GM12878 (cell line): ENCODE measurements at regions of chr9 and their contacts with region 1.

Region 1: DNA sequence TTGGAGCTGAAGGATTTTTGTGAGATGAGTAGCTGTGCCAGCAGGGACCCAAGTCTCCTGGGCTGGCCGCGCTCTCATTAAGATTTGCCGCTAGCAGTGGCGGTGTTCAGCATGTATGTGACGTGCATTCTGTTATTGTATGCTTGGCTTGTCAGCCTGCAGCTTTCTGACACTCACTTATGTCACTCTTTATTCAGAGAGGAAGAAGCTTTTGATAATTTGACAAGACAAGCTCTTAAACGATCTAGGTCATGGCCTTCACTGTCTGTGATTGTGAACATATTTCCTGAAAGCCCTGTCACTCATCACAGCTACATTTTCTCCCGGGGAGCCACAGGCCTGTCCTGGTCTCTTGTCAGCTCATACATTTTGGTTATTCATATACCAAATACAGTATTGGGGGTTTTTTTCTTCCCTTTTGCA is 98.2 kb upstream of the GRHPR start:
- DNase-seq: peak; percentile 43
- ATAC-seq: peak; percentile 76
- H3K4me3 ChIP-seq: peak overlapping the region; percentile 18
- H3K27ac ChIP-seq: peak overlapping the region; percentile 93
- H3K4me1 ChIP-seq: peaks cover 30% of the 10 kb centered on the region
- H3K27me3 ChIP-seq: no peaks in the 10 kb centered on the region
- CTCF ChIP-seq: no peak
- EP300 ChIP-seq: no peak
- POLR2A ChIP-seq: 0 out of 2 replicates have a peak, but pooled peaks have one; percentile 48
- RAD21 ChIP-seq: no peak

Region 2: GRCh38 chr9:37036776-37037502 is 287.3 kb before region 1 on chr9:
- CTCF ChIA-PET with region 1: interaction called, 9 read pairs
- POLR2A ChIA-PET with region 1: interaction called, 13 read pairs
- RAD21 ChIA-PET with region 1: interaction called, 14 read pairs
- SMC1A ChIA-PET with region 1: interaction called, 5 read pairs
- in situ Hi-C with region 1: no loop called
- intact Hi-C with region 1: loop called (anchors 5 kb)
- DNase-seq: no peak
- ATAC-seq: peak; percentile 52
- H3K4me3 ChIP-seq: peak overlapping the region; percentile 96
- H3K27ac ChIP-seq: peak overlapping the region; percentile 92
- H3K4me1 ChIP-seq: peaks cover 8% of the 10 kb centered on the region
- H3K27me3 ChIP-seq: no peaks in the 10 kb centered on the region
- CTCF ChIP-seq: 0 out of 6 replicates have a peak, but pooled peaks of 1 of the 3 experiments have one; percentile 2
- EP300 ChIP-seq: no peak
- POLR2A ChIP-seq: 0 out of 2 replicates have a peak, but pooled peaks have one; percentile 2
- RAD21 ChIP-seq: no peak

Region 3: DNA sequence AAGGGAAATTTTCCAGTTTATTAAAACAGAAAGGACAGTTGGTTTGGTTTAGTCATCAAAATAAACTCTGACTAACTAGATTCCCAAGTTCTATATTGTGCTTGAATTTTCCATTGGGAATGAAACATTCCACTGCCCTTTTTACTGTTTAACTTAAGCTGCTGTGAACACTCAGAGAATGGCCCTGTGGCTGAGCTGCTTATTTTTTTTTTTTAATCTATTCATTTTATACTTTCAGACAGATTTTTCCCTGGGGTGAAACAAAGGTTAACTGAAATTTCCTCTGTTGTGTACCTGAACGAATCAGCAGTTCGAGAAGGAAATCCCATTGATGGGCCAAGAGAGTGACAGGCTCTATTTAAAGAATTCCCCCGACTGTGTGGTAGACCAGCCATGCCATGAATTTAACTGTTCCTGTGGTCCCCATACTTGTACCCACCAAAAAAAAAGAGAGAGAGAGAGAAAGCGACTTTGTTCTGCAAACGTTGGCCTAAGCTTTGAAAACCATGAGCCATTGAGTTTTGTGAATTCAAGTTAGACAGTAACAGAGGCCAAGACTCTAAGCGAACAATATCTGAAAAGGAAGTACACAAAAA is 40.4 kb before region 1 on chr9:
- CTCF ChIA-PET with region 1: no interaction called
- POLR2A ChIA-PET with region 1: interaction called, 4 read pairs
- RAD21 ChIA-PET with region 1: interaction called, 6 read pairs
- SMC1A ChIA-PET with region 1: interaction called, 10 read pairs
- in situ Hi-C with region 1: no loop called
- intact Hi-C with region 1: no loop called
- DNase-seq: peak; percentile 72
- ATAC-seq: peak; percentile 63
- H3K4me3 ChIP-seq: peak overlapping the region; percentile 57
- H3K27ac ChIP-seq: peak overlapping the region; percentile 84
- H3K4me1 ChIP-seq: peaks cover 13% of the 10 kb centered on the region
- H3K27me3 ChIP-seq: no peaks in the 10 kb centered on the region
- CTCF ChIP-seq: no peak
- EP300 ChIP-seq: 0 out of 4 replicates have a peak, but pooled peaks of 1 of the 2 experiments have one; percentile 37
- POLR2A ChIP-seq: no peak
- RAD21 ChIP-seq: no peak

Region 4: GRCh38 chr9:37302277-37302676 is 22.0 kb before region 1 on chr9:
- CTCF ChIA-PET with region 1: interaction called, 32 read pairs
- POLR2A ChIA-PET with region 1: interaction called, 9 read pairs
- RAD21 ChIA-PET with region 1: interaction called, 42 read pairs
- SMC1A ChIA-PET with region 1: interaction called, 65 read pairs
- in situ Hi-C with region 1: no loop called
- intact Hi-C with region 1: no loop called
- DNase-seq: peak; percentile 90
- ATAC-seq: peak; percentile 91
- H3K4me3 ChIP-seq: peak overlapping the region; percentile 43; the same call in 1 of the 2 replicates
- H3K27ac ChIP-seq: peak overlapping the region; percentile 95
- H3K4me1 ChIP-seq: peaks cover 48% of the 10 kb centered on the region
- H3K27me3 ChIP-seq: no peaks in the 10 kb centered on the region
- CTCF ChIP-seq: no peak
- EP300 ChIP-seq: peak; percentile 82 to 93
- POLR2A ChIP-seq: no peak
- RAD21 ChIP-seq: peak; percentile 31; the same call in 1 of the 2 replicates

Region 5: GRCh38 chr9:37337301-37337890 is 13.1 kb after region 1 on chr9:
- CTCF ChIA-PET with region 1: interaction called, 38 read pairs
- POLR2A ChIA-PET with region 1: interaction called, 17 read pairs
- RAD21 ChIA-PET with region 1: interaction called, 11 read pairs
- SMC1A ChIA-PET with region 1: interaction called, 37 read pairs
- in situ Hi-C with region 1: no loop called
- intact Hi-C with region 1: no loop called
- DNase-seq: no peak
- ATAC-seq: peak; percentile 47
- H3K4me3 ChIP-seq: no peak overlapping the region; the same call in 1 of the 2 replicates
- H3K27ac ChIP-seq: peak overlapping the region; percentile 21
- H3K4me1 ChIP-seq: peaks cover 34% of the 10 kb centered on the region
- H3K27me3 ChIP-seq: no peaks in the 10 kb centered on the region
- CTCF ChIP-seq: no peak
- EP300 ChIP-seq: no peak
- POLR2A ChIP-seq: no peak
- RAD21 ChIP-seq: no peak